WTC11 (cell line): ENCODE measurements at regions of chr5 and their contacts with region 1.

Region 1: GRCh38 chr5:150256410-150257064 is 33.0 kb downstream of the CAMK2A start:
- DNase-seq: peak; percentile 74
- ATAC-seq: peak; percentile 91
- H3K4me3 Mint-ChIP-seq: no peak overlapping the region
- H3K27ac Mint-ChIP-seq: 0 out of 2 replicates have a peak overlapping the region, but pooled peaks have one; percentile 9
- H3K4me1 Mint-ChIP-seq: peaks cover 5% of the 10 kb centered on the region
- H3K27me3 Mint-ChIP-seq: no peaks in the 10 kb centered on the region
- CTCF ChIP-seq: no peak; the same call in 1 of the 2 replicates

Region 2: GRCh38 chr5:150234576-150235499 is 21.7 kb before region 1 on chr5:
- CTCF ChIA-PET with region 1: interaction called, 10 read pairs
- POLR2A ChIA-PET with region 1: no interaction called
- DNase-seq: no peak
- ATAC-seq: no peak
- H3K4me3 Mint-ChIP-seq: no peak overlapping the region
- H3K27ac Mint-ChIP-seq: no peak overlapping the region
- H3K4me1 Mint-ChIP-seq: no peaks in the 10 kb centered on the region
- H3K27me3 Mint-ChIP-seq: no peaks in the 10 kb centered on the region
- CTCF ChIP-seq: no peak

Region 3: GRCh38 chr5:150278916-150279315 is 22.4 kb after region 1 on chr5:
- CTCF ChIA-PET with region 1: no interaction called
- POLR2A ChIA-PET with region 1: no interaction called
- DNase-seq: no peak
- ATAC-seq: no peak
- H3K4me3 Mint-ChIP-seq: no peak overlapping the region
- H3K27ac Mint-ChIP-seq: no peak overlapping the region
- H3K4me1 Mint-ChIP-seq: peaks cover 2% of the 10 kb centered on the region
- H3K27me3 Mint-ChIP-seq: no peaks in the 10 kb centered on the region
- CTCF ChIP-seq: no peak

Region 4: DNA sequence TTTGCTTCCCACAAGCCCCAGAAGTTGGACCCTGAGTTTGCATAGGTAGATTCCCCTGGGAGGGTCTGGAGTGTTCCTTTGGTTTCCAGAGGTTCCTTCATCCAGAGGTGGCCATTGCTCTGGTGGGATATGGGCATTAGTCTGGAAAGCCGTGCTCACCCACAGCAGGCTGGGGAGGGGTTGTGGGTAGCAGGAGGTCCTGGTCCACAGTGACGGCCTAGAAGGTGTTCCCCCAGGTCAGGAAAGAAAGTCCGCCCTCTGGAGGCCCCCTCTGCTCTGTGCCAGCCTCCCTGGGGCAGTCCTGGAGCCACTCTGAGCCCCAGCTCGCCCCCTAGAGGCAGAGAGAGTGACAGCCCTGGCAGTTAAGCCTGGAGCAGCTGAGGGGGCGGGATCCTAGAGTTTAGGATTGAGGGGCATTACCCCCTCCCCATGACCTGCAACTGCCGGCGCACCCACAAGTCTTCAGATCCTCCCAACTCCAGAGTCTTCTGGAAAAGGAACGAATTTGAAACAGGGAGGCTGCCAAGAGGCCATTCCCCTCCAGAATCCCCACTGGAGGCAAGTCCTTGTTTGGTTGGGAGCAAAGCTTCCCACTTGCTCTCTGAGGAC is 288.2 kb after region 1 on chr5:
- CTCF ChIA-PET with region 1: no interaction called
- POLR2A ChIA-PET with region 1: no interaction called
- DNase-seq: peak; percentile 94
- ATAC-seq: peak; percentile 99
- H3K4me3 Mint-ChIP-seq: no peak overlapping the region
- H3K27ac Mint-ChIP-seq: no peak overlapping the region
- H3K4me1 Mint-ChIP-seq: no peaks in the 10 kb centered on the region
- H3K27me3 Mint-ChIP-seq: no peaks in the 10 kb centered on the region
- CTCF ChIP-seq: peak; percentile 90